ENCODE measurements at regions of chr21 and their contacts with region 1.

Region 1: GRCh38 chr21:39183237-39184007 is at the start of gene PSMG1:
- DNase-seq: peak; percentile 79 to 93 (median 90)
- H3K4me3 ChIP-seq: peak within 1 kb of the TSS; percentile 72 to 99 (median 89)
- H3K27ac ChIP-seq: peak within 1 kb of the TSS; percentile 65 to 97 (median 90)
- H3K27me3 ChIP-seq: no peaks in the 10 kb centered on the region
- CTCF ChIP-seq: peak in 15 of 56 donors; percentile 1 to 29 (median 11)
- total RNA-seq, gene PSMG1: 15.0 to 45.2 (median 29.2) TPM

Region 2: GRCh38 chr21:38733973-38734546 is 449.4 kb before region 1 on chr21:
- intact Hi-C with region 1: loop called in 1 of 2 experiments (anchors 5 kb)
- DNase-seq: peak; percentile 59 to 93 (median 86)
- H3K4me3 ChIP-seq: peak overlapping the region; percentile 20 to 68 (median 53)
- H3K27ac ChIP-seq: peak overlapping the region in 46 of 59 donors; percentile 11 to 80 (median 59)
- H3K27me3 ChIP-seq: peaks cover 0 to 2% (median 0%) of the 10 kb centered on the region in 45 donors
- CTCF ChIP-seq: peak; percentile 77 to 98 (median 94)

Region 3: DNA sequence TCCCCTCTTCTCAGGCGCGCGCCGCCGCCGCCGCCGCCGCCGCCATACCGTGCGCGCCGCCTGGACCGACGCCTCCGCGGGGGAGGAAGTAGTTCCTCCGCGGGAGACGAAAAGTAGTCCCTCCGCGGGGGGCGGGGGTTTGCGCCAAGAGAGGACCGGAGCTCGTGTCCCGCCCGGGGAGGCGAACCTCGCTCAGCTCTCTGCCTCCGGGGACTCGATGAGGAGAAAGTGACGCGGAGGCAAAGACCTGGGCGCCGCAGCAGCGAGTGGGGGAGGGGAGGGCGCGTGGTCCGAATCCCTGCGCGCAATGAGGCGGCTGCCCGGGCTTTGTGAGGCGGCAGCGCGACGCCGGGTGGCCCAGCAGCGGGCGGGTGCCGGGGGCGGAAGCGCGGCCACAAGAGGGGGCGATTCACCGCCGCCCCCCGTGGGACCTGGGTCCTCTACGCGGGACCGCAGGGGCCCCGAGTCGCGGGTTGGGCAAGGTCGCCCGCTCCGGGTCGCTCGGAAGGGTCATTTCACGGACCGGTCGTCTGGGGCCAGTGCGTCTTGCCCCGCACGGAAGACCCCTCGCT is 130.2 kb after region 1 on chr21 and contains the start of gene BRWD1:
- intact Hi-C with region 1: loop called (anchors 2 to 5 kb)
- DNase-seq: peak; percentile 54 to 81 (median 68)
- H3K4me3 ChIP-seq: peak within 1 kb of the TSS; percentile 55 to 98 (median 87)
- H3K27ac ChIP-seq: peak within 1 kb of the TSS; percentile 81 to 100 (median 98)
- H3K27me3 ChIP-seq: no peaks in the 10 kb centered on the region
- CTCF ChIP-seq: peak in 51 of 56 donors; percentile 17 to 63 (median 44)
- total RNA-seq, gene BRWD1: 78.6 to 146 (median 112) TPM

Region 4: DNA sequence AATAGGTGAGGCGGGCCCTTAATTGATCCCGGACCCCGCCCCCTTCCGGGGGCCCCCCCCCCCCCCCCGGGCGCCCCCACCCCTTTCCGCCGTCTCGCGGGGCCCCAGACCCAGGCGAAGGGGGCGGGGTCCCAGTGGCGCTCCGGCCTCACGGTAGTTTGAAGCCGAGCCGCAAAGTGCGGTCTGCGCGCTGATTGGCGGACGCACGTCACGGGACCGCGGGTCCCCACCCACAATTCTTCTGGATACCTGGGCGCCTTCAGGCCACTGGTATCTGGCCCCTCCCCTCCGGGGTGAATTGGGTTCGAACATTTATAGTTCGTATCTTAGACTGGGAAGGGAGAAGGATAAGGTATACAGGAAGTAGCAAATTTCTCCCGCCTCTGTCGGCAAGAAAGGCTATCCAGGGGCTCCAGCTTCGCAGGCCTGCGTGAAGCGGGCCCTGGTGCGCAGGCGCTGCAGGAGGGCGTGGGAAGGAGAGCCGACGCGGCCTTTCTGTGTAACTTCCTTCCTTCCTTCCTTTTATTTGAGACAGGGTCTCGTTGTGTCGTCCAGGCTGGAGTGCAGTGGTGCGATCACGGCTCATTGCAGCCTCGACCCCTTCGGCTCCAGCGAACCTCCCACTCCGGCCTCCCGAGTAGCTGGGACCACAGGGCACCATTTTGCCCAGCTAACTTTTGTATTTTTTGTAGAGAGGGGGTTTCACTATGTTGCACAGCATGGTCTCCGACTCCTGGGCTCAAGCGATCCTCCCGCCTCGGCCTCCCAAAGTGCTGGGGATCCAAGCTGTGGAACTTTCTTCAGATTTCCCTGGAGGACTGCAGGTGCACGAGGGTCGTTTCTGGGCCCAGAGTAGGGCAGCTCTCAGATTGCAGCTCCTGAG is 166.0 kb after region 1 on chr21:
- intact Hi-C with region 1: loop called in 1 of 2 experiments (anchors 5 kb)
- DNase-seq: peak; percentile 95 to 97 (median 97)
- H3K4me3 ChIP-seq: peak overlapping the region; percentile 51 to 98 (median 78)
- H3K27ac ChIP-seq: peak overlapping the region; percentile 60 to 96 (median 90)
- H3K27me3 ChIP-seq: no peaks in the 10 kb centered on the region
- CTCF ChIP-seq: peak in 7 of 56 donors; percentile 9 to 23 (median 15)

Region 5: DNA sequence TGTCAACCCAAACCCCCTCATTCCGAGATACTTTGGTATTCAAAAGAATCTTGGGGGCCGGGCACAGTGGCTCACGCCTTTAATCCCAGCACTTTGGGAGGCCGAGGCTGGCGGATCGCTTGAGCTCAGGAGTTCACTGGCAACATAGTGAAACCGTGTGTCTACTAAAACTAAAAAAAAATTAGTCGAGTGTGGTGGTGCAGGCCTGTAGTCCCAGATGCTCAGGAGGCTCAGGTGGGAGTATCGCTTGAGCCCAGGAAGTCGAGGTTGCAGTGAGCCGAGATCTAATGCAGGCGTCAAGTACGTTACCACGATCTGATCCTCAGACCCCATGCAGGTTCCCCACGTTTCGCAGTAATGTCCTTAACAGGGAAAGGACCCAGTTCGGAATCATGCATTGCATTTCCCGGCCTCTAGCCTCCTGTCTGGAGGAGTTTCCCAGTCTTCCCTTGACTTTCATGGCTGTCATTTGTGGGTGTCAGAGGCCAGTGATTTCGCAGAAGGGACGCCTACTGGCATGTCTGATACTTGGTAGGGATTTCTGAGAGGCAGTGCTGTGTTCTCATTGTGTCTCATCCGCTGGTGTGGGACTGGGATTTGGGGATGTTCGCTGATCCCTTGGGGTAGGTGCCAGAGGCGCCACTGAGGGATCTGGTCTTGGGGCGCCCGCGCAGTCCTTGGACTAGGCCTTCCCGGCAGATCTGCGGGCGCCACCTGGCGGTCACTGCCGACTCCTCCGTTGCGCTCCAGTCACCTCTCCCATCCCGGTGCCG is 204.8 kb after region 1 on chr21:
- intact Hi-C with region 1: loop called (anchors 5 kb)
- DNase-seq: peak; percentile 83 to 95 (median 90)
- H3K4me3 ChIP-seq: peak overlapping the region; percentile 28 to 69 (median 57)
- H3K27ac ChIP-seq: peak overlapping the region in 48 of 59 donors; percentile 2 to 95 (median 76)
- H3K27me3 ChIP-seq: no peaks in the 10 kb centered on the region
- CTCF ChIP-seq: peak; percentile 76 to 98 (median 94)

Region 6: GRCh38 chr21:39445321-39446269 is 262.2 kb after region 1 on chr21 and contains the start of gene LCA5L:
- intact Hi-C with region 1: loop called in 1 of 2 experiments (anchors 10 kb)
- DNase-seq: peak; percentile 71 to 91 (median 80)
- H3K4me3 ChIP-seq: peak within 1 kb of the TSS; percentile 63 to 99 (median 90)
- H3K27ac ChIP-seq: peak within 1 kb of the TSS; percentile 83 to 100 (median 97)
- H3K27me3 ChIP-seq: no peaks in the 10 kb centered on the region
- CTCF ChIP-seq: peak in 37 of 56 donors; percentile 8 to 57 (median 33)
- total RNA-seq, gene LCA5L: 0.36 to 4.6 (median 1.6) TPM in 117 of 120 experiments, not detected in the others

Region 7: GRCh38 chr21:39555911-39556590 is 372.6 kb after region 1 on chr21:
- intact Hi-C with region 1: no loop called
- DNase-seq: peak in 2 of 10 donors; percentile 29 to 47
- H3K4me3 ChIP-seq: peak overlapping the region in 1 of 59 donors; percentile 17
- H3K27ac ChIP-seq: peak overlapping the region in 1 of 59 donors; percentile 10
- H3K27me3 ChIP-seq: no peaks in the 10 kb centered on the region
- CTCF ChIP-seq: no peak